ENCODE measurements at regions of chr11 and their contacts with region 1.

Region 1: DNA sequence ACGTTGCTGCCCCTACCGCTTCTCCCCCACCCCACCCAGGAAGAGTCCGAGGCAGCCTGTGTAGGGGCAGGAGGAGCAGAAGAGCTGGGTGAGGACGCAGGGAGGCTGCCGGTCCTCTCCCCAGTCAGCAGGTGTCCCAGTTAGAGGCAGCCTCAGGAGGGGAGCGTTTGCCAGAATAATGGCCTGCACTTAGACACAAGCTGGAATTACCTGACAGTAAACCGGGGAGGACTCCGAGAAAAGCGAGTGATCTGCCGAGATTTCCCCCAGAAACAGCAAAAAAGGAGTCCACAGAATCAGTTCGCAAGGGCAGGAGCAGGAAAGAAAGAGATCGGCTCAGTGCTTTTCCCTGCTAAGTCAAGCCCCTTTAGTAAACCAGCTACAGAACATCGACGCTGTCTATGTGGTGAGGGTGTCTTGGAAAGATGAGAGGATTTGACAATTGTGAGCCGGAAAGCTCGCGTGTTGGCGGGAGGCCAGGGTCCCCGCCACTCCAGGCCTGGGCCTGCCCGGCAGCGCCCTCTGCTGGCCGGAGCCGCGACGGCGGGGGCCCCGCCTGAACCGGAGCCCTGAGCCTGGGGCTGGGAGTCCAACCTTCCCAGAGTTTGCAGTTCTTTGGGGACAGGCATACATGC is 17.7 kb upstream of the THRSP start:
- DNase-seq: no peak
- H3K4me3 ChIP-seq: peak overlapping the region; percentile 59
- CTCF ChIP-seq: peak; percentile 92

Region 2: GRCh38 chr11:77748266-77748665 is 297.7 kb before region 1 on chr11:
- CTCF ChIA-PET with region 1: interaction called, 10 read pairs
- POLR2A ChIA-PET with region 1: no interaction called
- DNase-seq: no peak
- H3K4me3 ChIP-seq: no peak overlapping the region
- CTCF ChIP-seq: no peak

Region 3: DNA sequence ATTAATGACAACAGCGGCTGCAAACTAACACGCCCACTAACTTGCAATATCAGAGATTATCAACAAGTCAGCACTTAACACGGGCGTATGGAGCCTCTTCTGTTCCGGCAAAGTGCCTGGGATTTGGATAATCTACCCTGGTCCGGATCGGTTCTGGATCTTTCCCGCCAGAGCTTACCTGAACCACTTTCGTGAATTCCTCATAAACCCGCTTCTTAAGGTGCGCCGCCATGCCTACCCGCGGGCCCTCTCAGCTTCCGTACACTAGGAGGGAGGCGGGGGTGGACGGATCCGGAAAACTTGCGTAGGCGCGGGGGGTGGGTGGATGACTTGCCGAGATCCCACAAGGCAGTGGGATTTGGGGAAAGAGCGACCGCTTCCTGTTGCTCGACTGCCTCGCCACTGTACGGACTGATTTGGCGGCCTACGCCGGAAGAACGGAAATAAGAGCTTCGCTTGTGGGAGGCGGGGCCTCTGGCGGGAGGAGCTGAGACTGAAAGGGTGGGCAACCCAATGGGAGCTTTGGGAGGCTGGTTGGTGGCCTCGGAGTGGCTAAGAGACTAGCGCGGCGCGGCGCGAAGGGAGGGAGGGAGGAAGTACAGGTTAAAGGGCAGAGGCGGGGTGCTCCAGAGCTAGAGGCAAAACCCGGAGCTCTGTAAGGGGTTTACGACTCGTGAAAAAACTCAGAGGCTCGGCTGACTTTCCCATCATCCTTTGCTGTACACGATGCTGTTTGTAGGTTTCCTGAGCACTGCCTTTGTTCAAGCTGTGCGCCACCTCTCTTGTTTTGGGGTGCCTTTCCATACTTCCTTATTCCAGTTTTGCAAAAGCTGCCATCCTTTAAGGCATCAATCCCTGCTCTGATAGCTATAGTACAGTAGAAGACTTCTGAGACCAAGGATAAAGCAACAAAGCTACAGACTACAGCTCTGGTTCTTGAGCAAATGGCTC is 51.3 kb before region 1 on chr11 and contains the start of gene INTS4:
- CTCF ChIA-PET with region 1: interaction called, 36 read pairs
- POLR2A ChIA-PET with region 1: interaction called, 3 read pairs
- DNase-seq: peak; percentile 99
- H3K4me3 ChIP-seq: peak within 1 kb of the TSS; percentile 80
- CTCF ChIP-seq: no peak

Region 4: DNA sequence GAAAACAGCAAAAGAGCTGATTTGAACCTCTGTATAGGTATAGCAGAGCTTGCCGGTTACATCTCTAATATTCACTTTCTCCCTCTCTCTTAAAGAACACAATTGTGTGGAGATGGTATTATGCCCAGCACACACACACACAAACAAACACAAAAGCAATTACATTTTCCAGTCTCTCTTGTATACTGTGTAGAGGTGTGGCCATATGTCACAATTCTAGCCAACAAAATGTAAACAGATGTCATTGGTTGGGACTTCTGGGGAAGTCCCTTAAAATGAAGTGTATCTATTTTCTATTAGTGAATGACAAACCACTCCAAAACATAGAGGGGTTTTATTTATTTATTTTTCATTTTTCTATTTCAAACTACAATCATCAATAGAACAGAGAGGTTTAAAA is 35.7 kb before region 1 on chr11:
- CTCF ChIA-PET with region 1: interaction called, 13 read pairs
- POLR2A ChIA-PET with region 1: no interaction called
- DNase-seq: no peak
- H3K4me3 ChIP-seq: no peak overlapping the region
- CTCF ChIP-seq: no peak

Region 5: DNA sequence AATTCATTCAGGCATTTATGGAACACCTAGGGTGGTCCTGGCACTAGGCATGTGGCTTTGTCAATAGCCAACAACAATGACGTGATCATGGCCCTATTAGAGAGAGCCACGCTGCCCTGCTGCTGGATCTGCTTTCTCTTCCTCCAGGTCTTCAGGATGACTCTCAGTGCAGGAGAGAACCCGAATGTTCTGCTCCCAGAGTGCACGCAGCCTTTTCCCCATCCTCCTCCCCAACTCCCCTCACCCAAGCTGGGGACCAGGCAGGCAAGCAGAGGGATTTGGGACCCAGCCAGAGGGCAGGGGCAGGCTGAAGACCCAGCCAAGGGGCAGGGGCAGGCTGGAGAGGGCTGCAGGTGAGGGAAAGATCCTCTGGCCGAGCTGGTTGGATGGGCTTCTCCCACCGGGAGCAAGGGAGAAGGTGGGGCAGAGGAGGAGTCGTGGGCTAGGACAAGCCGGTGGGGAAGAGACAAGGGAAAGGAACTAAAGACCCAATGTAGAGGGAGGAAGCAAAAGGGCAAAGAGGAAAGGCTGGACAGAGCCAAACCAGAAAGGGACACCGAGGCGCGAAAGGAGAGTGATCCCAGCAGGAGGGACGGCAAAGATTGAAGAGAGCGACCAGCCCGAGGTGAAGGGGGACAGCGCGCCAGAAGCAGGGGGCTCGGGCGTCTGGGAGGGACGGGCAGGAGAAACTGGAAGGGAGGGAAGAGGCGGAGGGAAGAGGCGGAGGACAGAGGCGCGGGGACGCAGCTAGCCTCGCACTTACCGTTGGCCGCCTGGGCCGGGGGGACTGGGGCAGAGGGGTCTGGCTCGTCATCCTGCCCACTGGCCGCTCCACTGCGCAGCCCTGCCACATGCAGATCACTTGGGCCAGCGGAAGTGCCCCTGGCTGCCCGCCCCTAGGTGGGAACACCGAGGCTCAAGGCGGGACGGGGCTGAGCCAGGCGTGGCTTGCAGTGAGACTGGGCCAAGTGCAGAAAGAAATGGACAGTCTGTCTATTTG is 23.3 kb before region 1 on chr11 and contains the start of gene KCTD14:
- CTCF ChIA-PET with region 1: interaction called, 13 read pairs
- POLR2A ChIA-PET with region 1: no interaction called
- DNase-seq: no peak
- H3K4me3 ChIP-seq: peak within 1 kb of the TSS; percentile 55
- CTCF ChIP-seq: no peak

Region 6: DNA sequence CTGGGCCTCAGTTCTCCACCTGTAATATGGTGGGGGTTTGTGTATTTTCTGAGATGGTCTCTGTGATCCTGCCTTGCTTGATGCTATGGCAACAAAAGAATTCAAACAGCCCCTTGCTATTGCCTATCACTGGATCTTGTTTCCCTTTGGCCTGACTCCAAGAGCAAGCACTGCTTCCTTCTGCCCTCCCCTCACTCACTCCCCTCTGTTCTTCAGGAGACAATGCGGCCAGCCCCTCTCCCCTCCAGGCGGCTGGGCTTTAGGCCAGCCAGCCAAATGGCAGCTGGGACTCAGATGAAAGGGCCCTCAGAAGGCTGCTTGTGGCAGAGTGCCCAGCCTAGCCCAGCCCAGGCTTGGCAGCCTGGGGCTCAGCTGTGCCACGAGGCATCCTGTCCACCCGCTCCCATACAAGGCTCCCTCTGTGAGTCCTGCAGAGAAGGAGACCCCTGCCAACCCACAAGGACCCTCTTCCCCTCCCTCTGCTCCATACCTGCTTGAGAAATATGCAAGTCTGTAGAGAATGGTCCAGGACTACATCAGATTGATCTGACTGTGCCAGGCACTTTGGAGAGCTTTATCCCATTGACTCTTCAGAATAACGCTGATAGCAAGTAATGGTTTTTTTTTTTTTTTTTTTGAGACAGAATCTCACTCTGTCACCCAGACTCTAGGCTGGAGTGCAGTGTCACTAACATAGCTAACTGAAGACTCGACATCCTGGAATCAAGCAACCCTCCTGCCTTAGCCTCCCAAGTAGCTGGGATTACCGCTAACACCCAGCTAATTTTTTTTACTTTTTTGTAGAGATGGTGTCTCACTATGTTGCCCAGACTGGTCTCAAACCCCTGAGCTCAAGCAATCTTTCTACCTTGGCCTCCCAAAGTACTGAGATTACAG is 15.3 kb before region 1 on chr11:
- CTCF ChIA-PET with region 1: interaction called, 90 read pairs
- POLR2A ChIA-PET with region 1: no interaction called
- DNase-seq: no peak
- H3K4me3 ChIP-seq: no peak overlapping the region
- CTCF ChIP-seq: no peak

Region 7: DNA sequence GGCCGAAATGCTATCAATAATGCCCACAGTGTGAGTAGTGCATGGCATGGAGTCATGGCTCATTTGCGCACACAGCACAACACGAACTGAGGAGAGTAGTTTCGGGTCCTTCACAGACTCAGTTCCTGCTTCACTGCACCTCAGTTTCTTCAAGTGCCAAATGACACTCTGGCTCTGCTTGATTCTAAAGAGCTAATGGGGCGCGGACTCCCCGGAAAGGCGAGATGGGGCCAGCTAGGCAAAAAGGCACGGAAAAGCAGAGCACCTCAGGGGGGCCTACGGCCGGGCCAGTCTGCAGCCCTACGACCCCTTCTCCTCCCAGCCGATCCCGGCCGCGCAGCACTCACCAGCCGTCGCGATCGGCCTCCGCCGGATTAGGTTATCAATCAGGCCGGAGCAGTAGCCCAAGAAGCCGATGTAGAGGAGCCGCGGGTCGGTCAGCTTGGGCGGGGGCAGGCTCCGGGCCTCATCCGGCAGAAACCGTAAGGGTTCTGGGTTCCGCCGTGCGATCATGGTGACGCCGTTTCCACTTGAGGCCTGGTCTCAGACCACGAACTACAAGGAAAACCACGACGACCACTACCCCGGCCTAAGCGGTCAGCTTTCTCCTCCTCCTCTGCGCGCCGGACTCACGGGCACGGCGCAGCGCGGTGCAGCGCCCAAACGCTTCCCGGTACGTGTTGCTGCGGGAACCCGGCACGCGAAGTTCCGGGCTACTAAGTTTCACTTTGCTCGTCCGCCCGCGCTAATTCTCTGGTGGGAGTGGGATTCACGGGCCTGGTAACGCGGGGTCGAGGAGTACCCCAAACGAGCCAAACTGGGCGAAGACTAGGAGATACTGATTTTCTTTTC is 33.5 kb after region 1 on chr11 and contains the start of gene NDUFC2:
- CTCF ChIA-PET with region 1: interaction called, 28 read pairs
- POLR2A ChIA-PET with region 1: interaction called, 3 read pairs
- DNase-seq: no peak
- H3K4me3 ChIP-seq: peak within 1 kb of the TSS; percentile 91
- CTCF ChIP-seq: no peak

Measured in AG04449 (cell line).